ENCODE measurements at regions of chr5 and their contacts with region 1.

Region 1: DNA sequence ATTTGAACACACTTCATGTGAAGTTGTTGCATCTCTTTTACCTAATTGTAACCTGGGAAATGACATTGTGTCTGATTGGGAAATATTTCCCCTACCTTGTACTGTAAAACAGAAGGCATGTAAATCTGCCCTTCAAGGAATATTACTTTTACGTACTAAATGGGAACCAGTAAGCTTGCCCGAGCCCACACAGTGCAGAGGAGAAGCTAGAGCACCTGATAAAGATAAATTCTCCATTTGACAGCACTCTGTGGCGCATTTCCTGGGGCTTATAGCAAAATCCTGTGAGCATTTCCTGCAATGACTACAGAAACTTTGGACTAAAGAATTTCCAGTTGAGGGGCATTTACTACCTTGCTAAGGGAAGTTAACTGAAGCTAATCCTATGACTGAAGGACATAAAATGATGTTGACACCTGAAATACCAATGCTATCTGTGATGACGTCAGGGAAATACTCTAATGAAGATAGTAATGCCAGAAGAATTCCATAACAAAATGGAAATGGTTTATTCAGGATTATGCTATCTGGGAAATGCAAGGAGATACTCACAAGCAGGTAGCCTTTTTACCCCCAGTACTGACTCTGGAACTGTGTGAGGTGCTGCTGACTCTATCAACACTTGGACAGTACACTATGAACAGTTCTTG is 78.4 kb upstream of the LIFR start:
- DNase-seq: peak in 1 of 2 experiments; percentile 30
- H3K4me3 ChIP-seq: no peak overlapping the region
- H3K27ac ChIP-seq: no peak overlapping the region
- H3K4me1 ChIP-seq: peaks cover 14% of the 10 kb centered on the region
- H3K27me3 ChIP-seq: no peaks in the 10 kb centered on the region
- CTCF ChIP-seq: no peak

Region 2: GRCh38 chr5:38613988-38614833 is 20.6 kb before region 1 on chr5:
- CTCF ChIA-PET with region 1: interaction called, 8 read pairs
- POLR2A ChIA-PET with region 1: interaction called, 3 read pairs
- intact Hi-C with region 1: loop called (anchors 1 kb)
- DNase-seq: peak; percentile 64 to 83
- H3K4me3 ChIP-seq: no peak overlapping the region
- H3K27ac ChIP-seq: no peak overlapping the region
- H3K4me1 ChIP-seq: peaks cover 11% of the 10 kb centered on the region
- H3K27me3 ChIP-seq: no peaks in the 10 kb centered on the region
- CTCF ChIP-seq: no peak

Region 3: GRCh38 chr5:38622723-38623129 is 12.1 kb before region 1 on chr5:
- CTCF ChIA-PET with region 1: no interaction called
- POLR2A ChIA-PET with region 1: interaction called, 10 read pairs
- intact Hi-C with region 1: no loop called
- DNase-seq: no peak
- H3K4me3 ChIP-seq: no peak overlapping the region
- H3K27ac ChIP-seq: no peak overlapping the region
- H3K4me1 ChIP-seq: no peaks in the 10 kb centered on the region
- H3K27me3 ChIP-seq: no peaks in the 10 kb centered on the region
- CTCF ChIP-seq: no peak

Region 4: GRCh38 chr5:38650946-38651345 is 16.1 kb after region 1 on chr5:
- CTCF ChIA-PET with region 1: interaction called, 3 read pairs
- POLR2A ChIA-PET with region 1: interaction called, 18 read pairs
- intact Hi-C with region 1: loop called (anchors 1 kb)
- DNase-seq: peak in 1 of 2 experiments; percentile 27
- H3K4me3 ChIP-seq: peak overlapping the region; percentile 50
- H3K27ac ChIP-seq: 0 out of 2 replicates have a peak overlapping the region, but pooled peaks have one; percentile 13
- H3K4me1 ChIP-seq: peaks cover 16% of the 10 kb centered on the region
- H3K27me3 ChIP-seq: no peaks in the 10 kb centered on the region
- CTCF ChIP-seq: no peak

Measured in PC-9 (cell line).